ENCODE measurements at regions of chr4 and their contacts with region 1.

Region 1: DNA sequence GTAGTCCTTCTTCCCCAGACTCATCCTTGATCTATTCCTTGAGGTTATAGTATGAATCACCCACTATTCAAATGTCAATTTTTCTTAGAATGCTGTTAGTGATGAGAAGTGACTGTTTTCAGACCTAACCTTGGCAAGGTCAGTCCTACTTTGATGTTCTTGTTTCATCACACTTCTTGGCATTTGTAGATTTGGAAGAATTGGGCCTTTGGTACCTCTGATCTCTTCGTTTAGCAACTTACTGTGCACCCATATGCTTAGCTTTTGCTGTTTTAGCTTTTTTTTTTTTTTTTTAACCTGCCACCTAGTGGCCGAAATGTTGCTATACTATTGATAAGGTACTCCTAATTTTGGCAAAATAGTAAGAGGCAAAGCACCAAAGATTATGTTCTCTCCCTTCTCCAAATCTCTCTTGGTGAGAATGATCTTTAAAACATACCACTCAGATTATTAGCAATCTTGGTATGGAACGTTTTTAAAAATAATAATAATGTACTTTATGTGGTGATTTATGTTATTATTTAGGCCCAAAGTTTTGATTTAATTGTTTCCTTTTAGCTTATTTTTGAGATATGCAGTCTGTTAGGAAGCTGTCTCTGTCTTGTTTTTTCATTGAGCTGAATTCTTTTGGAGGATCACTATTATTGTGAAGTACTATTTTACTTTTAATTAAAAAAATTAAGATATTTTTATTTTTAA is 16.6 kb downstream of the DCK start:
- DNase-seq: no peak
- ATAC-seq: peak; percentile 66; the same call in 1 of the 2 replicates
- H3K4me3 Mint-ChIP-seq: no peak overlapping the region
- H3K27ac Mint-ChIP-seq: no peak overlapping the region
- H3K4me1 Mint-ChIP-seq: peaks cover 21% of the 10 kb centered on the region
- H3K27me3 Mint-ChIP-seq: no peaks in the 10 kb centered on the region
- CTCF ChIP-seq: peak; percentile 42; the same call in 1 of the 2 replicates

Region 2: DNA sequence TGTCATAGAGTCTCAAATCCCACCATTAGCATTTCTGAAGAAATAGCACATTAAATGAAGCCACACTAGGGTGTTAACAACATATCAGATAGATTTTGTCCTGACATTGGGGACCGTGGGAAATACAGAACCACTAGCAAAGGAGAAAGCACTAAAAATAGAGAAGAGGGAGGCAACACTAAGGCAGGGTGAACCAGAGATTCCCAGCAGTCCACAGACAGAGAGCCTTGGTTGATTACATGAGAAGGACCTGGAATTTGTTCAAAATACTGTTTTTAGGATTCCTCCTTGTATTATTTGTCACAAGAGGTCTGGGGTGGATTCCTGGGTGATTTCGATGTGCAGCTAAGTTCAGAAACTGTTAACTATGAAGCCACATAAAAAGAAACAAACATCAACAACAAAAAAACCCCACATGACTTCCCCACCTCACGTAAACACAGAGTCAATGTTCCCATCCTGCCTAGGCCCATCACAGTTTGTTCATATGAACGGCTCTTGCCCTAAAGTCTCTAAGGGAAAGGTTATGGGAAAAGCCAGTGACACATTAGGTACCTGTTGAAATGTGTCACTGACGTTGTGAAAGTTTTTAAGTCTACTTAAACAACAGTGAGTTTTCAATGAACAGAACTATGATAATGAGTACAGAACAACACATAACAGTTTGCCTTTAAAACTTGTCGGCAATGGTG is 146.8 kb before region 1 on chr4:
- CTCF ChIA-PET with region 1: interaction called, 10 read pairs
- POLR2A ChIA-PET with region 1: no interaction called
- DNase-seq: no peak
- ATAC-seq: peak; percentile 19; the same call in 1 of the 2 replicates
- H3K4me3 Mint-ChIP-seq: no peak overlapping the region
- H3K27ac Mint-ChIP-seq: peak overlapping the region; percentile 72; the same call in 1 of the 2 replicates
- H3K4me1 Mint-ChIP-seq: peaks cover 22% of the 10 kb centered on the region
- H3K27me3 Mint-ChIP-seq: no peaks in the 10 kb centered on the region
- CTCF ChIP-seq: no peak

Region 3: DNA sequence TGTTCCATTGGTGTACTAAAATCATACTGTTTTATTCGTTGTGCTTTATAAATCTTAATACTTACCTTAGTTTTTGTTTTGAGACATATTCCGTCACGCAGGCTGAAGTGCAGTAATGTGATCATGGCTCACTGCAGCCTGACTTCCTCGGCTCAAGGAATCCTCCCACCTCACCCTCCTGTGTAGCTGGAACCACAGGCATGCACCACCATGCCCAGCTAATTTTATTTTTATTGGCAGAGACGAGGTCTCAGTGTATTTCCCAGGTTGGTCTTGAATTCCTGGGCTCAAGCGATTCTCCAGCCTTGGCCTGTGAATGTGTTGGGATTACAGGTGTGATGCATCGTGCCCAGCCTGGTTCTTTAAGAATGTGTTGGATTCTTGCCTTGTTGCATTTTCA is 41.0 kb before region 1 on chr4:
- CTCF ChIA-PET with region 1: no interaction called
- POLR2A ChIA-PET with region 1: no interaction called
- DNase-seq: no peak
- ATAC-seq: no peak
- H3K4me3 Mint-ChIP-seq: no peak overlapping the region
- H3K27ac Mint-ChIP-seq: no peak overlapping the region
- H3K4me1 Mint-ChIP-seq: no peaks in the 10 kb centered on the region
- H3K27me3 Mint-ChIP-seq: no peaks in the 10 kb centered on the region
- CTCF ChIP-seq: no peak

Region 4: GRCh38 chr4:70993181-70994068 is 16.6 kb before region 1 on chr4 and contains the start of gene DCK:
- CTCF ChIA-PET with region 1: interaction called, 28 read pairs
- POLR2A ChIA-PET with region 1: interaction called, 11 read pairs
- DNase-seq: peak; percentile 89
- ATAC-seq: peak; percentile 90
- H3K4me3 Mint-ChIP-seq: peak within 1 kb of the TSS; percentile 88
- H3K27ac Mint-ChIP-seq: peak within 1 kb of the TSS; percentile 91
- H3K4me1 Mint-ChIP-seq: peaks cover 54% of the 10 kb centered on the region
- H3K27me3 Mint-ChIP-seq: no peaks in the 10 kb centered on the region
- CTCF ChIP-seq: no peak
- total RNA-seq, gene DCK: 15.0 to 15.9 TPM (median 15.2 TPM) in 3 replicates

Region 5: GRCh38 chr4:71020611-71021010 is 10.6 kb after region 1 on chr4:
- CTCF ChIA-PET with region 1: interaction called, 11 read pairs
- POLR2A ChIA-PET with region 1: no interaction called
- DNase-seq: no peak
- ATAC-seq: no peak
- H3K4me3 Mint-ChIP-seq: no peak overlapping the region
- H3K27ac Mint-ChIP-seq: no peak overlapping the region
- H3K4me1 Mint-ChIP-seq: no peaks in the 10 kb centered on the region
- H3K27me3 Mint-ChIP-seq: no peaks in the 10 kb centered on the region
- CTCF ChIP-seq: no peak

Region 6: GRCh38 chr4:71029504-71029903 is 19.5 kb after region 1 on chr4:
- CTCF ChIA-PET with region 1: interaction called, 12 read pairs
- POLR2A ChIA-PET with region 1: no interaction called
- DNase-seq: no peak
- ATAC-seq: peak; percentile 90
- H3K4me3 Mint-ChIP-seq: peak overlapping the region; percentile 20; the same call in 1 of the 2 replicates
- H3K27ac Mint-ChIP-seq: peak overlapping the region; percentile 36; the same call in 1 of the 2 replicates
- H3K4me1 Mint-ChIP-seq: peaks cover 26% of the 10 kb centered on the region
- H3K27me3 Mint-ChIP-seq: no peaks in the 10 kb centered on the region
- CTCF ChIP-seq: no peak

Region 7: DNA sequence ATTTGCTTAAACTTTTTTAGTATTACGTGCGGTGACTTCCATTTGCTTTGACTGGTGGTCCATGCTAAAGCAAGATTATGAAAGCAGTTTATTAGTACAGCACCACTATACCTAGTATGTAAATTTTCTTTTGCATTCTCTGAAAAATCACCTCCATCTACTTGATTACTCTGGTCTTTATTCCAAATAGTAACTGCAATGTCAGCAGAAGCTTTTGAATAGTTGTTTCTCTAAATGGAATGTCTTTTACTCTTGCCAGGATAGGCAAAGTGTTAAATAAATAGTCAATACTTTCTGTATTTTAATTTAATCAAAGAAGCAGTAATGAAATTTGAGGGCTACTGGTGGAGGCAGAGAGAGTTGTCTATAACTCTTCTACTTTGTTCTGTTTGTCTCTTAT is 161.6 kb after region 1 on chr4:
- CTCF ChIA-PET with region 1: no interaction called
- POLR2A ChIA-PET with region 1: no interaction called
- DNase-seq: no peak
- ATAC-seq: no peak
- H3K4me3 Mint-ChIP-seq: no peak overlapping the region
- H3K27ac Mint-ChIP-seq: no peak overlapping the region
- H3K4me1 Mint-ChIP-seq: no peaks in the 10 kb centered on the region
- H3K27me3 Mint-ChIP-seq: peaks cover 4% of the 10 kb centered on the region
- CTCF ChIP-seq: no peak

Measured in WTC11 (cell line).